Activated B cell treated with CpG ODN at 0.5 μM for 24 hours (primary cell): ENCODE measurements at regions of chr1 and their contacts with region 1.

Region 1: GRCh38 chr1:84442256-84442655 is 36.8 kb upstream of the RPF1 start:
- DNase-seq: no peak
- ATAC-seq: peak; percentile 94
- H3K4me3 Mint-ChIP-seq: no peak overlapping the region
- H3K27ac Mint-ChIP-seq: peak overlapping the region; percentile 24
- H3K4me1 Mint-ChIP-seq: peaks cover 23% of the 10 kb centered on the region
- H3K27me3 Mint-ChIP-seq: peaks cover 5% of the 10 kb centered on the region
- CTCF ChIP-seq: no peak

Region 2: DNA sequence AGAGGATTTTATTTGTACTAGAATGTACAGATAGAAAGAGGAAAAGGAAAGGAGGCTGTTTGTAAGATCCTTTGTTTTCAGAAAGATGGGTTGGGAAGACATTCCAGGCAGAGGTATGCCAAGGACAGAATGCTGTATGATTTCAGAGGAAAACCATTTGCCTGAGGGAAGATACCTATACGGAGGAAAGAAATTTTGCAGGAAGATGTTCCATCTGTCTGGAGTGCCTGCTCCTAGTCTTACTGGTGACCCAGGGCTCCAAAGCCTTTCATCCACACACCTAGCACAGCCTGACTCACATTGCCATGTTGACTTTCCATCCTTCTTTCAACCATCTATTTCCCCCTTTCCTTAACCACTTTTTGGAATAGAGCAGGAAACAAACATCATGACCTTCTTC is 122.6 kb before region 1 on chr1:
- CTCF ChIA-PET with region 1: no interaction called
- POLR2A ChIA-PET with region 1: no interaction called
- intact Hi-C with region 1: no loop called
- DNase-seq: no peak
- ATAC-seq: no peak
- H3K4me3 Mint-ChIP-seq: no peak overlapping the region
- H3K27ac Mint-ChIP-seq: no peak overlapping the region
- H3K4me1 Mint-ChIP-seq: peaks cover 2% of the 10 kb centered on the region
- H3K27me3 Mint-ChIP-seq: peaks cover 1% of the 10 kb centered on the region
- CTCF ChIP-seq: no peak

Region 3: DNA sequence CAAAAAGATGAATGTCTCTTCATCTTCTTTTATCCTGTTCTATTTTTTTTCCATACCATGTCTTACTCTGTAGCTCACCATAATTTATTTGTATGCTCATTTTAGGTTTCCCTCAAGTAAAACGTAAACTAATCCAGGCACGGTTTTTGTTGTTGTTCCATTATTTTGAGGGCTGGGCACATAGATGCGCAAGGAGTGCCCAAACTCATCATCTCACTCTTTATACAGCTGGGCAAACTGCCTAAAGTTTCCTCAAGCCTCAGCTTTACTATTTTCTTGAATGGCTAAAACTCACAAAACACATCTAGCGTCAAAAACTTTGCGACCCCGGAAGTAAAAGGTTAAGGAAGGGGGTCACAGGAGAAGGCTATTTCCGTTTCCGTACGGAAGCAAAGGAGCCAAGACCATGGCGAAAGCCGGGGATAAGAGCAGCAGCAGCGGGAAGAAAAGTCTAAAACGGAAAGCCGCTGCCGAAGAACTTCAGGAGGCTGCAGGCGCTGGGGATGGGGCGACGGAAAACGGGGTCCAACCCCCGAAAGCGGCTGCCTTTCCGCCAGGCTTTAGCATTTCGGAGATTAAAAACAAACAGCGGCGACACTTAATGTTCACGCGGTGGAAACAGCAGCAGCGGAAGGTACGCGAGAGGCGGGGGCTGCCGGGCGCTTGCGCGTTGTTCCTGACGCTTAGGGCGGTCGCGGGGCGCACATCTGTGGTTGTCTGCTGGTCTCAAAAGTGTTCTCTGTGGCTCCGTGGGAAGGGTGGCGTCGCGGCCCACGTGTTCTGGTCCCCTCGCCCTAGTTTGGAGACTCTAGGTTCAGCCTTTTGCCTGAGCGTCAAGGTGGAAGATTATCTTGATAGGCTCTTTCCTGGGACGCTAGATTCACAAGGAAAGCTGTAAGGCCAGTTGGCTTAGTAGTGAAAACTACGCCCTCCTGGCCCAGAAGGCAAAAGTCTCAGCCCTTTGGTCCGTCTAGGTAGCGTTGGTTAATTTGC is 36.9 kb after region 1 on chr1 and contains the start of gene RPF1:
- CTCF ChIA-PET with region 1: no interaction called
- POLR2A ChIA-PET with region 1: interaction called, 3 read pairs
- intact Hi-C with region 1: loop called (anchors 1 kb)
- DNase-seq: peak; percentile 64
- ATAC-seq: peak; percentile 96
- H3K4me3 Mint-ChIP-seq: peak within 1 kb of the TSS; percentile 97
- H3K27ac Mint-ChIP-seq: peak within 1 kb of the TSS; percentile 97
- H3K4me1 Mint-ChIP-seq: peaks cover 37% of the 10 kb centered on the region
- H3K27me3 Mint-ChIP-seq: peaks cover 21% of the 10 kb centered on the region
- CTCF ChIP-seq: no peak
- total RNA-seq, gene RPF1: 42.8 and 46.3 TPM in 2 replicates

Region 4: DNA sequence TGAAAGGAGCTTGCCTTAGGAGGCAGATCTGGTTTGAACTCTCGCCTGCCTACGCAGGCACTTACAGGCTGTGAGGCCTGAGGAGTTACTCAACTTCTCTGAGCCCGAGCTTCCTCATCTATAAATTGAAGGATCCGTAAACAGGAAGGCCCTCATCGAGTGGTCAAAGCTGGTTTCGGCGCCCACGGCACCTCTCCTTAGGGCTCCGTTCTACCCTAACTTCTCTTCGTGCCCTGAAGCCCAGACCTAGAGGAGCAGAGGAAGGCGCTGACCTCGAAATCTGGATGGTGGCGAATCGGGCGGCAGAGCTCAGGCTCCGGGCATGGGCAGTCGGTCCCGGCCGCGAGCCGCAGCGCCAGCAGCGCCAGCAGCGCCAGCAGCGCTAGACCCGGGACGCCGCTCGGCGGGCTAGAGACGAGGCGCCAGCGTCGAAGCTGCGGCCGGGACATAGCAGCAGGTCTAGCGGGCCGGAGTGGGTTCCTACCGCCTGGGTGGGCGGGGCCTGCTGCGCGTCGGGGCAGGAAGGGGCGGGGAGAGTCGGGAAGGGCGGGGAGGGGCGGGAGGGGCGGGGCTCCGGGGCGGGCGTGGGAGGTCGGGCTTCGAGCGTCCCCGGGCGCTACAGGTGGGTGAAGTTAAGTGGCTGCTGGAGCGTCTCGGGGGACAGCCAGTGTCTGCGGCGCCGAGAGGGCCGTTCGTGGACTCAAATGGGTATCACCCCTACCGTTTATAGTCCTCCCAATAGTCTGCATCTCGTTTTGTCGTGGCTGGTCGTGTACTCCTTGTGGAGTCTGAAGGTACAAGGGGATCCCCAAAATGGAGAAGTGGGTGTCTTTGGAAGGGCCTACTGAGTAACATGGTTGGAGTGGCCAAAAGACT is 131.9 kb after region 1 on chr1 and contains the start of gene CTBS:
- CTCF ChIA-PET with region 1: interaction called, 8 read pairs
- POLR2A ChIA-PET with region 1: interaction called, 6 read pairs
- intact Hi-C with region 1: loop called (anchors 1 kb)
- DNase-seq: peak; percentile 81
- ATAC-seq: peak; percentile 91
- H3K4me3 Mint-ChIP-seq: peak within 1 kb of the TSS; percentile 96
- H3K27ac Mint-ChIP-seq: peak within 1 kb of the TSS; percentile 99
- H3K4me1 Mint-ChIP-seq: peaks cover 40% of the 10 kb centered on the region
- H3K27me3 Mint-ChIP-seq: no peaks in the 10 kb centered on the region
- CTCF ChIP-seq: no peak
- total RNA-seq, gene CTBS: 11.8 and 13.2 TPM in 2 replicates

Region 5: DNA sequence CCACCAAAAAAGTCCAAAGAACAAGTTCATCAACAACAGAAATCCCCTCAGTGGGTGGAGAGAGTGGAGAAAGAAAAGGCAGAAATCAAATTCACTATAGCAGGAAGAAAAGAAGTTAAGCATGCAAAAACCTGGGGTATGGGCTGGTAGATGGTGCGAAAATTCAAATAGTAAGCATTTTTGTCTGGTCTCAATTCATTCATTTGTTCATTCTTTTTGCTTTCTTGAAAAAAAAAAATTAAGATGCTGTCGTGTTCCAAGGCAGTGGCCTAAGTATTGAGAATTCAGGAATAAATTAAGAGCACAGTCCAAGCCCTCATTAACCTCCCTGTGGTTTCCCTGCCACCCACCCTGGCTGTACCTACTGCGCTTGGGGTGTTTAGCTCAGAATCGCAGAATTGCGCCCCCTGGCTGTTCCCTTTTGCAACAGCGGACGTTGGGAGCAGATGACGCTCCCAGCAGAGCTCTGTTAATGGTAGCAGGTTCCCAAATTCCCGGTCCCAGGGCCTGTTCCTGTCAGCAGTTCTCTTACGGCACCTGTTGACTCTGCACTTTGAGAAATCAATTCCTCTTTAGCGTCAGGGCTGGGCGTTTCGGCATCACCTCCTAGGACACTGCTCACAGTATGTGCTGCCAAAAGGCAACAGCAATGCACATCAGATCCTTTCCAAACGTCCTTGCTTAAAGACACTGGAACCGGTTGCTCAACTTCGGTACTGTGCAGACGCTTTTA is 282.0 kb after region 1 on chr1:
- CTCF ChIA-PET with region 1: interaction called, 7 read pairs
- POLR2A ChIA-PET with region 1: no interaction called
- intact Hi-C with region 1: loop called (anchors 1 kb)
- DNase-seq: peak; percentile 23
- ATAC-seq: peak; percentile 56
- H3K4me3 Mint-ChIP-seq: no peak overlapping the region
- H3K27ac Mint-ChIP-seq: no peak overlapping the region
- H3K4me1 Mint-ChIP-seq: no peaks in the 10 kb centered on the region
- H3K27me3 Mint-ChIP-seq: peaks cover 5% of the 10 kb centered on the region
- CTCF ChIP-seq: no peak

Region 6: DNA sequence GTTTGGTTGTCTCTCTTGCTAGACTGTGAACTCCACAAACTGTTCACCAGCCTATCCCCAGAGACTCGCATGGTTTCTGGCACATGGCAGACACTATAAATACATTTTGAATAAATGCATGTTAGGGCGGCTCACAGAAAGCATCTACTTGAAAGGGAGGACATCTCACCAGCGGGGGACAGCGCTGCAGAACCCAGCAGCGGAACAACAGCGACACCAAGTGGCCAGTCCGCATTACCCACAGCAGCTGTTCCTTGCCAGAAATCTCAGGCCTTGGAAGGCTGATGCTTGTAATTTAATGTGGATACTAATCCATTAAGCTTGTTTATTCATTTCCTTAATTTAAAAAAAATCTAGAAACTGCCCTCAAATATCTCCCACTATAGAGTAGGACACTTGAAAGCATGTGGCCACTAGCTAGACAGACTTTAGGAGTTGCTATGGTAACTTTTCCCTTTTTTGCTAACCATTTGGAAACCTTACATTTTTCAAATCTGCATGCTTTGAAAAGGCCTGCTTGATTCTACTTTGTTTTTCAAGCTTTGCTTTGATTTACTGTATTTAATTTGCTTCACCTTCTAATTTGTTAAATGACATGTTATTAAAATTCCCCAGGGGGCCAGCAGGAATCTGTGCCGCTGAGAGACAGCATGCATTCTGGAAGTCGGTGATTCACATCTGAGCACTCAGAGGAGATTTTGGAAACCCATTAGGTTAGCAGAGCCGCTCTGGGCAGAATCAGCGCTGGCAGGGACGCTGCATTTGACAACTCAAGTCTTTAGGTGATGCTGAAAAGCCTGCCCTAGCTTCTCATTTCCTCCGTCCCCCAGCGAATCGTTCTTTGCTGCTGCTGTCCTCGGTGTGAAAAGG is 311.5 kb after region 1 on chr1:
- CTCF ChIA-PET with region 1: interaction called, 17 read pairs
- POLR2A ChIA-PET with region 1: no interaction called
- intact Hi-C with region 1: loop called (anchors 1 kb)
- DNase-seq: peak; percentile 34
- ATAC-seq: peak; percentile 81
- H3K4me3 Mint-ChIP-seq: no peak overlapping the region
- H3K27ac Mint-ChIP-seq: no peak overlapping the region
- H3K4me1 Mint-ChIP-seq: peaks cover 4% of the 10 kb centered on the region
- H3K27me3 Mint-ChIP-seq: peaks cover 22% of the 10 kb centered on the region
- CTCF ChIP-seq: peak; percentile 51

Region 7: GRCh38 chr1:84772428-84772943 is 330.2 kb after region 1 on chr1:
- CTCF ChIA-PET with region 1: interaction called, 5 read pairs
- POLR2A ChIA-PET with region 1: no interaction called
- intact Hi-C with region 1: loop called (anchors 1 kb)
- DNase-seq: peak; percentile 58
- ATAC-seq: peak; percentile 71
- H3K4me3 Mint-ChIP-seq: no peak overlapping the region
- H3K27ac Mint-ChIP-seq: no peak overlapping the region
- H3K4me1 Mint-ChIP-seq: no peaks in the 10 kb centered on the region
- H3K27me3 Mint-ChIP-seq: peaks cover 5% of the 10 kb centered on the region
- CTCF ChIP-seq: peak; percentile 43

Region 8: GRCh38 chr1:84936116-84936810 is 494.0 kb after region 1 on chr1:
- CTCF ChIA-PET with region 1: no interaction called
- POLR2A ChIA-PET with region 1: no interaction called
- intact Hi-C with region 1: loop called (anchors 1 kb)
- DNase-seq: no peak
- ATAC-seq: peak; percentile 70
- H3K4me3 Mint-ChIP-seq: no peak overlapping the region
- H3K27ac Mint-ChIP-seq: no peak overlapping the region
- H3K4me1 Mint-ChIP-seq: peaks cover 4% of the 10 kb centered on the region
- H3K27me3 Mint-ChIP-seq: no peaks in the 10 kb centered on the region
- CTCF ChIP-seq: peak; percentile 99